ENCODE measurements at regions of chr12 and their contacts with region 1.

Region 1: GRCh38 chr12:28937196-28937595 is 211.9 kb upstream of the FAR2 start:
- DNase-seq: no peak
- ATAC-seq: no peak
- H3K4me3 ChIP-seq: no peak overlapping the region
- H3K27ac ChIP-seq: no peak overlapping the region
- H3K4me1 ChIP-seq: peaks cover 0 to 4% (median 0%) of the 10 kb centered on the region in 12 donors
- H3K27me3 ChIP-seq: no peaks in the 10 kb centered on the region
- CTCF ChIP-seq: no peak
- POLR2A ChIP-seq: no peak

Region 2: DNA sequence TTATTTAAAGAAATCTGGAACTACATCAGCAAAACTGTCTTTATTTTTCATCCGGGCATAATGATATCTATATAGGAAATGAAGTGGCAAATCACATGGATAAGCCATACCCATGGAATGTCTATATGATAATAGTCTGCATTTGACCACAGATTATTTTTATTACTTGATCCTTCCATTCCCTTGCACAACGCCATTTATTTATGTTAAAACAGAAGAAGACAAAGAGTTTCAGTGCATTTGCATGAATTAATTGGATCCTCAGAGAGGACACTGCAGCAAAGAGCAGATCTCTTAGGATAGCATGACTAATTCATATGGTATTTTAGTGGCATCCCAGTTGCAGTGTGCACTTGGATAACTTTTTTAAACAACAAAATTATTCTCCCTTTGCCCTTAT is 402.0 kb before region 1 on chr12:
- intact Hi-C with region 1: no loop called
- DNase-seq: no peak
- ATAC-seq: no peak
- H3K4me3 ChIP-seq: no peak overlapping the region
- H3K27ac ChIP-seq: no peak overlapping the region
- H3K4me1 ChIP-seq: peaks cover 0 to 16% (median 0%) of the 10 kb centered on the region in 12 donors
- H3K27me3 ChIP-seq: no peaks in the 10 kb centered on the region
- CTCF ChIP-seq: no peak
- POLR2A ChIP-seq: no peak

Region 3: DNA sequence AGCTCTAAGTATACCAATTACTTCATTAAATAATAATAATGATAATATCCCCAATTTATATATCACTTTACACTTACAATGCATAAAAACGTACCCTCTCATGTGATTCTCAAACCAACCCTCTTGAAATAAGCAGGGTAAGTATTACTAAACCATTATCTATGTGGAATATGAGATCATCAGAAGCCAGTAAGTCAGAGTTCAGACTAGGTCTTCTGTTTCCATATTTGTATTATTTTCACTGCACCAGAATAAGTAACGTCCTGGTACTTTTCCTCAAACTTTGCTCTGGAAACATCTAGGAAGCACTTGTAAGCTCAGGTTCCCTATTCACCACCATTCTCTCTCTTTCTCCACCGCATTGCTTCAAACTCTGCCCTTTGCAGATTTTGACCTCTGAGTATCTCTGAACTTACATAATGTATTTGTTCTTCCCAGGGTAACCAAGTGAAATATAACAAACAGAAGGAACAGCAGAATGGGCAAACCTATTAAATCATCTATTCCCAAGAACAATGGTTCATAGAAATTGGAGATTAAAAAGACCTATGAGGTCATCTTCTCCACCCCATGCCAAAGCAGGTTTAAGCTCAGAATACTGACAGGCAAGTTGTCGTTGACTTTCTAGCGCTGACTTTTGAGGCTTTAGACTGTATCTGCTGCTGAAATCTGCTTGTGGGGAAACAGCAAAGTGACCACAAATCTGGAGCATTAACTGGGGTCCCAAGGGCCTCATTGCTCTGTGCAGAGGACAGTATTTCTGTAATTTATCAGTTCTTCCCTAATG is 50.5 kb after region 1 on chr12:
- intact Hi-C with region 1: loop called in 1 of 10 experiments (anchors 5 kb)
- DNase-seq: peak in 1 of 5 donors; percentile 38
- ATAC-seq: peak in 2 of 4 donors; percentile 45 to 63
- H3K4me3 ChIP-seq: no peak overlapping the region
- H3K27ac ChIP-seq: peak overlapping the region in 7 of 12 donors; percentile 22 to 53 (median 27)
- H3K4me1 ChIP-seq: peaks cover 0 to 17% (median 0%) of the 10 kb centered on the region in 12 donors
- H3K27me3 ChIP-seq: peaks cover 0 to 3% (median 0%) of the 10 kb centered on the region in 9 donors
- CTCF ChIP-seq: no peak
- POLR2A ChIP-seq: no peak

Measured in heart left ventricle (tissue), 16 donors.